Posterior vena cava (tissue), 2 donors: ENCODE measurements at regions of chr17 and their contacts with region 1.

Region 1: DNA sequence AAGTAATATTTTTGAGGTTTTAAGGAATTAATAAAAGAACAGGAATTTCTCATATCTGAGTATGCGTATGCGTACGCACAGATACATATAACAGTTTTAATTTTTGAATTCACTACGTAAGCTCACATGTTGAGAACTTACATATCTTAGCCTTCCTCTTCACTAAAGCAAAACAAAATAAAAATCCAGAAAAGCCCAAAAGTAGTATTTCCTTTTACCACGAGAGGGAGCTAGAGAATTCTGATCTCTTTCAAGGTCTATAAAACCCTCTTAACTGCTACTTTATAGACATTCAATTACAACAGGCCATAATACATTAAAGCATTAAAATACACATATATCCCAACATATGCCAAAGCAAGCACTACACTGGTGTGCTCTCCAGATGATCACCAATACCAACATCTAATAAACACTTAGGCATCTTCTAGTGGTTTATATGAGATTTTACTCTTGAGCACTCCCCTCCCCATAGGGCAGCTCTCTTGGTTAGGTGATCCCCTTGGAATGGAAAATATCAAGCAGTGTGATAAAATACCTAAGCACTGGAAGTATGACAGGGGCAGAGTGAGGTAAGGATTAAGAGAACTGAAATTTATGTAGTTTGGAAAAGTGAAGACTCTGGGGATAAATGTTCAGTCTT is 94.0 kb downstream of the SKAP1 start:
- DNase-seq: no peak

Region 2: DNA sequence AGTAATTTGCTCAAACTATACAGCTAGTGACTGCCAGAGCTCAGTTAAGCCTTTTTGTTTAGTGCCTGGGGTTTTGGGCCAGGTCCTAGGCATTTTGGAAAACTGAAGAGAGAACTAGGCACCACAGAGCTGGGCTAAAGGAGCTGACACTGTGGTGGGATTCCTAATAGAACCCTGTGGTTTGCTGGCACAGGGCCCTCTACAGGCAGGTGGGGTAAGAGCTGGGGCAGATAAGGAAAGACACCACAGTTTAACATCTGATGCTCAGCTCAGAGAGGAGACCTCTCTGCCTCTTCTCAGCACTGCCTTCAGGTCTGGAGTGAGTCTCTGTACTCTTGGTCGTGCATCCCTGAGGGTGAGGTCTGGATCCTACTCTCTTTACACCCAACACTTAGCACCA is 107.3 kb before region 1 on chr17:
- intact Hi-C with region 1: loop called in 1 of 2 experiments (anchors 10 kb)
- DNase-seq: no peak

Region 3: GRCh38 chr17:48392857-48393256 is 56.9 kb after region 1 on chr17:
- intact Hi-C with region 1: no loop called
- DNase-seq: no peak